Activated T-helper 1 cell treated with anti-CD3 and anti-CD28 coated beads, Interleukin-12 subunit alpha, Interleukin-12 subunit beta, Interleukin-2, Interleukin-4 antibody, amounts not matched to agents 30 ng/mL and 10 ng/mL and 1 ng/mL, durations not matched to agents 14 hours and 24 hours and 36 hours (primary cell): ENCODE measurements at regions of chr12 and their contacts with region 1.

Region 1: DNA sequence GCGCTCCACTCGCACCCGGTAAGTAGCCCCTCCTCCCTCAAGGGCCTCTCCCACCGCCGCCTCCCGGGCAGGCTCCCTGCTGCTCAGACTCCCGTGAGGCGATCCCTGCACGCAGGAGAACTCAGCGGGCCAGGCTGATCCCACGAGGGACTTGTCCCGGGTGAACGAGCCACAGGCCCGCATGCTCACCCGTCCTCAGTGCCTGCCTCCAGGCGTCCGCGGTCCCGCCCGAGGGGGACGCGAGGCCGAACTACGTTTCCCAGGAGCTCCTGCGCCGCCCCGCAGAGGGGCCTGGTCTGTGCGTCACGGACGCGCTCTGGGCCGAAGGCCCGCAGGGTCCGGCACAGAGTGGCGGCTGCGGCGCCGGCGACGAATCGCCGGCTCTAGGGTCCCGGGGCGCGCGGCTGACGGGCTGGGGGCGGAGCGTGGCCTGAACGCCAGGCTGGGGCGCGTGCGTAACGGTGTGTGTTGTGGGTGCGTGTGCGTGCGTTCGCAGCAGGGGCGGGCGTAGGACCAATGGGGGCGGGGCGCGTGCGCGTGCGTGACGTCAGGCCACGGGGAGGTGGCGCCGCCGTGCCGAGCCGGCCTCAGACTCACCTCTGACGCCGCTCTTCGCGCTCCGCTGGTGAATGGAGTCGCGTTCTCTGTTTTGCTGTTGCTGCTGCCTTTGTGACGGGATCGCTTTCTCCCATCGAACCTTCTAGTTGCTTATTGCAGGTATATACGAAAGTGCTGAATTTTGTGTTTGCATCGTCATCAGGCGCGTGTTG is at the starts of genes ZNF10 and ZNF891:
- DNase-seq: peak; percentile 94
- H3K4me3 Mint-ChIP-seq: peak within 1 kb of the TSS; percentile 94
- H3K27ac Mint-ChIP-seq: peak within 1 kb of the TSS; percentile 98
- H3K4me1 Mint-ChIP-seq: peaks cover 21% of the 10 kb centered on the region
- H3K27me3 Mint-ChIP-seq: no peaks in the 10 kb centered on the region
- total RNA-seq, gene ZNF10: 5.1 and 6.4 TPM in 2 replicates
- total RNA-seq, gene ZNF891: 2.3 and 2.4 TPM in 2 replicates

Region 2: DNA sequence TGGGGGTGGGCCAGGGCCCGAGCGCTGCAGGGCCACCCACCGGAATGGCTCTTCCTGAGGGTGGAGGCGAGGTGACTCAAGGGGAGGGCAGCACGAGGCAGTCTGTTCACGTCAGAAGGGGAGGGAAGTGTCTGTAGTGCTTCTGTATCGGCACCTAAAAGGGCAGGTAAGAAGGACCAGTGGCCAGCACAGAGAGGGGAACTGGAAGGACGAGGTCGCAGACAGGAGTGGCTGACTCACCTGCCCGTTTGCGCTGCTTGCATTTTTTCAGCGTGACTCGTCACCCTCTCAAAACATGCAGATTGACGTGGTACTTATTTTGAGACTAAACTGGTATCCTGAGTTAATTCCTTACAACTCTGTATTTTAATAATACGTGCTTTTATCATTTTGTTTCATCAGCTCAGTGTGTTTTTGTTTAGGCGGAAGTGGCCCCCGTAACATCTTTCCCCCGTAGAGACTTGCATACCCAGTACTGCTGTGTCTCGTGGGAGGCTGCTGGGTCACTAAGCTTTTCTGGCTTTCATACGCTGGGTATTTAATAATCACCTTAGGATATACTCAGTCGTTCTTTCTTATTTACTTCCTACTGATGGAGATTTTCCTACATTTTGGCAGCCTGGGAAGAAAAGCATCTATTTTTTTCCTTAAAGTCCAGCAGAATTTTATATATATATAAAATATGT is 1392.9 kb before region 1 on chr12:
- intact Hi-C with region 1: no loop called
- DNase-seq: no peak
- H3K4me3 Mint-ChIP-seq: no peak overlapping the region
- H3K27ac Mint-ChIP-seq: no peak overlapping the region
- H3K4me1 Mint-ChIP-seq: no peaks in the 10 kb centered on the region
- H3K27me3 Mint-ChIP-seq: no peaks in the 10 kb centered on the region

Region 3: GRCh38 chr12:132761032-132761920 is 368.9 kb before region 1 on chr12 and contains the start of gene ANKLE2:
- intact Hi-C with region 1: loop called (anchors 2 kb)
- DNase-seq: peak; percentile 74
- H3K4me3 Mint-ChIP-seq: peak within 1 kb of the TSS; percentile 93
- H3K27ac Mint-ChIP-seq: peak within 1 kb of the TSS; percentile 96
- H3K4me1 Mint-ChIP-seq: peaks cover 24% of the 10 kb centered on the region
- H3K27me3 Mint-ChIP-seq: no peaks in the 10 kb centered on the region
- total RNA-seq, gene ANKLE2: 151 and 156 TPM in 2 replicates

Region 4: DNA sequence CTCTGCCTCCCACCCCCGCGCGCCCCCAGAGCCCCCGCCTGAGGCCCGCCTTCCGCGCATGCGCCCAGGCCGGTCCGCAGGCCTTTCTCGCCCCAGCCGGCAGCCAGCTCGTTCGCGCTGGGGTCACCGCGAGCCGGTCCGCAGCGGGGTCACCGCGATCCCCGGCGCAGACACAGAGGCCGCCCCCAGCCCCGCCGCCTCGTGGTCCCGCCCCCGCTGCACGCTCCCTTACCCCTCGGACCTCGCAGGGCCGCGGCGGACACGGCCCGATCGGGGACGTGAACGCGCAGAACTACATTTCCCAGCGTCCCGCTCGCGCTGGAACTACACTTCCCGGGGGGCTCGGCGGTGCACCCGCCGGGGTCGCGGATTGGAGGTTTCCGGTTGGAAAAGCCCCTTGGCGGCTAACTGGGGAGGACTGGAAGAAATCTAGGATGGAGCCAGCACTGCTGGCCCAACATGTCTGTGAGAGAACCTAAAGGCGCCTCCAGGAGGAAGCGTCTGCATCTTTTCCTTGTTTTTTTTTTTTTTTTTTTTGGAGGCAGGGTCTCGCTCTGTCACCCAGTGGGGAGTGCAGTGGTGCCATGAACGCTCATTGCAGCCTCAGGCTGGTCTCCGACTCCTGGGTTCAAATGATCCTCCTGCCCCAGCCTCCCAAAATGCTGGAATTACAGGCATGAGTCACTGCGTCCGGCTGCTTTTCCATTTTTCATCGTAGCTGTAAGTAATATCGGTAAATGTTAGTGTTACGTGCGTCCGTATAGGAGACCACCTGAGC is 174.0 kb before region 1 on chr12 and contains the start of gene ZNF605:
- intact Hi-C with region 1: loop called (anchors 1 kb)
- DNase-seq: peak; percentile 85
- H3K4me3 Mint-ChIP-seq: peak within 1 kb of the TSS; percentile 98
- H3K27ac Mint-ChIP-seq: peak within 1 kb of the TSS; percentile 94
- H3K4me1 Mint-ChIP-seq: peaks cover 18% of the 10 kb centered on the region
- H3K27me3 Mint-ChIP-seq: no peaks in the 10 kb centered on the region
- total RNA-seq, gene ZNF605: 6.3 and 7.5 TPM in 2 replicates

Region 5: DNA sequence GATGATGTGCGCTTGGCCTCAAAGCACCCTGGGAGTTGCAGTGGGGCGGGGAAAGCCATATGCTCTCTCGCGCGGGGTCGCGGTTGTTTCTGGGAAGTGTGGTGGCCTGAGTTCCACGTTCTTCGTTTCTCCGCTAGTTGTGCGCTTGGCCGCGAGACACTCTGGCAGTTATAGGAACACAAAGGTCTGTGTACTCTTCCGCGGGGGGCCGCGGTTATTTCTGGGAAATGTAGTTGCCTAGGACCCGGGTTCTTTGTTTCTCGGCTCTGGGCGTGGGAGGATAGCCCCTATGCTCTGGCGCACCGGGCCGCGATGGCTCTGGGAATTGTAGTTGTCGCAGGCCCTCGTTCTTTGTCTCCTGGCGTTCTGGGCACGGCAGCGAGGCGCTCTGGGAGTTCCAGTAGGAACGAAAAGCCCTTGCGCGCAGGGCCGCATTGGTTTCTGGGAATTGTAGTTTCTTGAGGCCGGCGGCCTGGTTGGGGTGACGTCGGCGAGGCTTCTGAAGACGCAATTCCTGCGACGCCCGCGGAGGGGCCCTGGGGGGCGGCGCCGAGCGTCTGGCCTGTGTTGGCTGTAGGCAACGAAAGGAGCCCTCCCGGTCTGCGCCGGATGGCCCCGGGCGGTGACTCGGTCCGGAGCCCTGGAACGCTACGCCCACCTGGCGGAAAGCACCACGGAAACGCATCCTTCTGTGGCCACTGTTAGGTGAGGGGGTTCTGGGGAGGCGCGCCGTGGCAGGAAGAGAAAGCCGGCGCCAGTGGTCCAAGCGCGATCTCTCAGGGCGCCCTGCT is 49.7 kb before region 1 on chr12 and contains the start of gene ZNF140:
- intact Hi-C with region 1: loop called (anchors 1 kb)
- DNase-seq: peak; percentile 93
- H3K4me3 Mint-ChIP-seq: no peak within 1 kb of the TSS
- H3K27ac Mint-ChIP-seq: peak within 1 kb of the TSS; percentile 84
- H3K4me1 Mint-ChIP-seq: no peaks in the 10 kb centered on the region
- H3K27me3 Mint-ChIP-seq: no peaks in the 10 kb centered on the region
- total RNA-seq, gene ZNF140: 15.0 and 15.1 TPM in 2 replicates

Region 6: GRCh38 chr12:133145981-133146380 is 15.8 kb after region 1 on chr12:
- intact Hi-C with region 1: no loop called
- DNase-seq: no peak
- H3K4me3 Mint-ChIP-seq: no peak overlapping the region
- H3K27ac Mint-ChIP-seq: no peak overlapping the region
- H3K4me1 Mint-ChIP-seq: no peaks in the 10 kb centered on the region
- H3K27me3 Mint-ChIP-seq: no peaks in the 10 kb centered on the region

Region 7: DNA sequence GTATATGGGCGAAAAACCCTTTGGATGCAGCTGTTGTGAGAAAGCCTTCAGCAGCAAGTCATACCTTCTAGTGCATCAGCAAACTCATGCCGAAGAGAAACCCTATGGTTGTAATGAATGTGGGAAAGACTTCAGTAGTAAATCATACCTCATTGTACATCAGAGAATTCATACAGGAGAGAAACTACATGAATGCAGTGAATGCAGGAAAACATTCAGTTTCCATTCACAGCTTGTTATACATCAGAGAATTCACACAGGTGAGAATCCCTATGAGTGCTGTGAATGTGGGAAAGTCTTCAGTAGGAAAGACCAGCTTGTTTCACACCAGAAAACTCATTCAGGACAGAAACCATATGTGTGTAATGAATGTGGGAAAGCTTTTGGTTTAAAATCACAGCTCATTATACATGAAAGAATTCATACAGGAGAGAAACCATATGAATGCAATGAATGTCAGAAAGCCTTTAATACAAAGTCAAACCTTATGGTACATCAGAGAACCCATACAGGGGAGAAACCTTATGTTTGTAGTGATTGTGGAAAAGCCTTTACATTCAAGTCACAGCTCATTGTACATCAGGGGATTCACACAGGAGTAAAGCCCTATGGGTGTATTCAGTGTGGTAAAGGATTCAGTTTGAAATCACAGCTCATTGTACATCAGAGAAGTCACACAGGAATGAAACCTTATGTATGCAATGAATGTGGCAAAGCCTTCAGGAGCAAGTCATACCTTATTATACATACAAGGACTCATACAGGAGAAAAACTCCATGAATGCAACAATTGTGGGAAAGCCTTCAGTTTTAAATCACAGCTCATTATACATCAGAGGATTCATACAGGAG is 72.5 kb after region 1 on chr12:
- intact Hi-C with region 1: loop called (anchors 2 kb)
- DNase-seq: no peak
- H3K4me3 Mint-ChIP-seq: no peak overlapping the region
- H3K27ac Mint-ChIP-seq: no peak overlapping the region
- H3K4me1 Mint-ChIP-seq: no peaks in the 10 kb centered on the region
- H3K27me3 Mint-ChIP-seq: no peaks in the 10 kb centered on the region

Region 8: DNA sequence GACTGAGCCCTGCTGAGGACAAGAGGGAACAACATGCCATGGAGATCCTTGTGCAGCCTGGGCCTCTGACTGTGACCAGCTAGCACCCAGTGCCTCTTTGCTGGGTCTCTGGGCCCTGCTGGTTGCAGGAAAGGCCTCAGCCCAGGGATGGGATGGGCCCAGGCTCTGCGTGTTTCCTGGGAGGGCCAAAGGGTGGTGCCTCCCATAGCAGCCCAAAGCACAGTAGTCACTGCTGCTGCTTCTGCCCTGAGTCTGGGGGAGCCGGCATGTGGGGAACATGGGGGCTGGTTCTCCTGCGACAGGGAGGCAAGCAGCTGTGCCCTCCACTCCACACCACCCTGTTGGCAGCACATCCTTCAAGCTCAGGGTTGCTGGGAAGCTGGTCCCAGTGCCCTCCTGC is 87.0 kb after region 1 on chr12:
- intact Hi-C with region 1: no loop called
- DNase-seq: no peak
- H3K4me3 Mint-ChIP-seq: no peak overlapping the region
- H3K27ac Mint-ChIP-seq: no peak overlapping the region
- H3K4me1 Mint-ChIP-seq: no peaks in the 10 kb centered on the region
- H3K27me3 Mint-ChIP-seq: no peaks in the 10 kb centered on the region